MCF 10A (cell line): ENCODE measurements at regions of chr1 and their contacts with region 1.

Region 1: DNA sequence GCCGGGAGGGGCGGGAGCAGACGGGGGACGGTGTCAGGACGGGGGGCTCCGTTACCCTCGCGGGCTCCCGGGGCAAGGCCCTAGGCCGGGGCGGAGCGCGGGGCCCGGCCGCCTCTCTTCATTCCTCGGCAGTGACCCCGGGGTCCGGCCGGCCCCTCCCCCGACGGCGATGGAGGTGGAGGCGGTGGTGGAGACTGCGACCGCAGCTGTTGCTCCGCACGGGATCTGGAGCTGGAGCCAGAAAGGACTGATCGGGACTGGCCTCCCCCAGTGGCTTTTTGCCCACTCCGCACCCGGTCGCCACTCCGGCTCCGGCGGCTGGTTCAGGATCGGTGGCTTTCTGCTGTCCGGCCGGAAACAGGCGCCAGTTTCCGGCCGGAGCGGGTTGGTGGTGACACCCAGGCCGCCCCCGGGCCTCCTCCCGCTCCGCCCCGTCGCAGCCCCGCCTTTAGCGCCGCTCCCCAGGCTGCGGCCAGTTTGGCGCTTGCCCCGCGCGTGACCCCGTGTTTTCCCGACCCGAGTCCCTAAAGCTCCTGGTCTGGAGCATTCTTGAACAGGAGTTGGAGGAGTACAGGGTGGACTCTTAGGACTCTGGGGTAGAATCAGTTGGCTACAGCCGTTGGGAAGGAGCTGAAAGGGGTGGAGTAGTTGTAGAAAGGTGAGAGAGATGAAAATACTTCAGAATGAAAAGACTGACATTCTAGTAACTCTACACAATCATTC is at the start of gene OTUD7B:
- DNase-seq: peak; percentile 91
- H3K4me3 Mint-ChIP-seq: peak within 1 kb of the TSS; percentile 95
- H3K27ac Mint-ChIP-seq: peak within 1 kb of the TSS; percentile 95
- H3K4me1 Mint-ChIP-seq: peaks cover 29% of the 10 kb centered on the region
- H3K27me3 Mint-ChIP-seq: no peaks in the 10 kb centered on the region
- CTCF ChIP-seq: no peak
- total RNA-seq, gene OTUD7B: 44.3 and 47.4 TPM in 2 replicates

Region 2: GRCh38 chr1:149844101-149844500 is 166.5 kb before region 1 on chr1:
- CTCF ChIA-PET with region 1: no interaction called
- POLR2A ChIA-PET with region 1: interaction called, 23 read pairs
- intact Hi-C with region 1: no loop called
- DNase-seq: peak; percentile 80
- H3K4me3 Mint-ChIP-seq: peak overlapping the region; percentile 93
- H3K27ac Mint-ChIP-seq: peak overlapping the region; percentile 65
- H3K4me1 Mint-ChIP-seq: peaks cover 52% of the 10 kb centered on the region
- H3K27me3 Mint-ChIP-seq: no peaks in the 10 kb centered on the region
- CTCF ChIP-seq: no peak

Region 3: DNA sequence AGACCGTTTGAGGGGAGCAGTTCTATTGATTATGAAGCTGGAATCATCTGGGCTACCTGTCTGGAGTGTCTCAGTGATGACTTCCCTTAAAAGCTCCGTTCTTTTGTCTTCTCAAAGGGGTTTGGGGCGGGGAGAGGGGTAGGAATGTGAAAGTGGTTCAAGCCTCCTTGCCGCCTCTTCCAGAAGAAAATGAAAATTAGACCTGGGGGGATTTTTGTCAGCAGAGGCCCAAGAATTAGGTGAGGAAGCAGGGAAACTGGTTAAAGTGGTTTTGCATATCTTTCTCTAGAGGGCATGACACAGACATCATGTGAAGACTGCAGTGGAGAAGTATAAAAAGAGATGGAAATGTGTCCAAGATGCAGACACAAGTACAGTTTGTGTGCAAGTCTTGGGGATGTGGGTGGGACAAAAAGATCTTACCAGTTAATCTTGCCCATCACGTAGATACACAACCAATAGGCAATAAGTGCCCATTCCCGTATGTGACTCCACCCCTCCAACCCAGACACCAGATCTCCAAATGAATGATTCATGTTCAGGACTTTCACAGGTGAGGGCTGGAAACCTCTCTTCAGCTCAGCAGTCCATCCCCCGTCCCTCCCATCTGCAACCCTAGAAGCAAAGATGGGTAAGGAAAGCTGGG is 73.4 kb before region 1 on chr1:
- CTCF ChIA-PET with region 1: interaction called, 3 read pairs
- POLR2A ChIA-PET with region 1: interaction called, 60 read pairs
- intact Hi-C with region 1: no loop called
- DNase-seq: peak; percentile 96
- H3K4me3 Mint-ChIP-seq: peak overlapping the region; percentile 91
- H3K27ac Mint-ChIP-seq: peak overlapping the region; percentile 93
- H3K4me1 Mint-ChIP-seq: peaks cover 48% of the 10 kb centered on the region
- H3K27me3 Mint-ChIP-seq: no peaks in the 10 kb centered on the region
- CTCF ChIP-seq: peak; percentile 23

Region 4: GRCh38 chr1:149986486-149987294 is 23.9 kb before region 1 on chr1:
- CTCF ChIA-PET with region 1: interaction called, 3 read pairs
- POLR2A ChIA-PET with region 1: interaction called, 96 read pairs
- intact Hi-C with region 1: no loop called
- DNase-seq: peak; percentile 46
- H3K4me3 Mint-ChIP-seq: no peak overlapping the region
- H3K27ac Mint-ChIP-seq: peak overlapping the region; percentile 6
- H3K4me1 Mint-ChIP-seq: peaks cover 29% of the 10 kb centered on the region
- H3K27me3 Mint-ChIP-seq: no peaks in the 10 kb centered on the region
- CTCF ChIP-seq: no peak

Region 5: DNA sequence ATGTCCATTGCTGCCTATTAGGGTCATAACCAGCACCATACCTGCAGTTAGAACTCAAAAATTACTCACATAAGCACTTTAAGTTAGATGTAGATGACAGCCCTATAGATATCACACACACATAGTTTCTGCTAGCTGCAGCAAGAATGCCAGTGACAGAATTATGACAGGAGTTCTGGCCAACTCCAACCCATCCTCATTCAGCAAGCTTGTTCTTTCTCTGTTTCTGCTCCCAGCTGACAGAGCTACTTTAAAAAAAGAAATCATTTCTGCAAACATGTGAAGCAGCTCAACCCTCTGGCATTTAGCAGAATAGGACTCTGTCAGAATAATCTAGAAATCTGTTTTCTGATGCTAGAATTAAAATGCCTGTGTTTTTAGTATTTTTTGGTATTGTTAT is 23.8 kb after region 1 on chr1:
- CTCF ChIA-PET with region 1: interaction called, 3 read pairs
- POLR2A ChIA-PET with region 1: interaction called, 20 read pairs
- intact Hi-C with region 1: no loop called
- DNase-seq: no peak
- H3K4me3 Mint-ChIP-seq: no peak overlapping the region
- H3K27ac Mint-ChIP-seq: no peak overlapping the region
- H3K4me1 Mint-ChIP-seq: no peaks in the 10 kb centered on the region
- H3K27me3 Mint-ChIP-seq: no peaks in the 10 kb centered on the region
- CTCF ChIP-seq: no peak

Region 6: DNA sequence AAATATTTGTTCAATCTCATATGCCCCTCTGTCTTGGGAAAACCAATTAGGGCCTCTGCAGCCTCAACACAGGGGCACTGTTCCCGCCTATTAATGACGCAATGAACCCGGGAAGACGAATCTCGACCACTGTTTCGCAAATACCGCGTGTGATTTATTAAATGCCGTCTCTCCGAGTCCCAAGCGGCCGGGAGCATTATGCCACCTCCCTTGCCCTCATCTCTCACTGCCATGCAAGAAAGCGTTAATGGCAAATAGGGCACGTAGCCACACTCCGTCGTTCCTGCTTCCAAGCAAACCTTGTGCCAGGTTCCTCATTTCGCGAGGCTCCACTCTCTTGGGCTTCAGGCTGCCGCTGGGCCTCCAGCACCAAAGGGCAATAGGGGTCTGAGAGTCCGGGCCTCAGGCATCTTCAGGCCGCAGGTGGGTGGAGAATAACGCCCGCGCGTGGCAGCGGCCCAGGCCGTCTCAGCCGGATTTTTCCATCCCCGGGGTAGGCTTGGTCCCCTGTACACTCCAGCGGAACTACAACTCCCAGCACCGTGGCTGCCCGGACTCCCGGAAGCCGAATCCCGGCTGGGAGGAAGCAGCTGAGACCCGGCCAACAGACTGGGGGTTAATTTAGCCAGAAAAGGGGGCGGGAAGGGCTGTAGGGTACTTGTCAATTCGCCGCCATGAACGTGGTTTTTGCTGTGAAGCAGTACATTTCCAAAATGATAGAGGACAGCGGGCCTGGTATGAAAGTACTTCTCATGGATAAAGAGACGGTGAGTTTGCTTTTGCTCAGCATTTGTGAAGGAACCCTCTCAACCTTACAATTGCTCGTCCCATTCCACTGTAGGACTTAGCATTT is 56.9 kb after region 1 on chr1 and contains the start of gene VPS45:
- CTCF ChIA-PET with region 1: interaction called, 7 read pairs
- POLR2A ChIA-PET with region 1: interaction called, 127 read pairs
- intact Hi-C with region 1: loop called (anchors 1 kb)
- DNase-seq: peak; percentile 95
- H3K4me3 Mint-ChIP-seq: peak within 1 kb of the TSS; percentile 91
- H3K27ac Mint-ChIP-seq: peak within 1 kb of the TSS; percentile 87
- H3K4me1 Mint-ChIP-seq: peaks cover 33% of the 10 kb centered on the region
- H3K27me3 Mint-ChIP-seq: no peaks in the 10 kb centered on the region
- CTCF ChIP-seq: no peak
- total RNA-seq, gene VPS45: 35.1 and 55.1 TPM in 2 replicates

Region 7: GRCh38 chr1:150221552-150221951 is 211.0 kb after region 1 on chr1:
- CTCF ChIA-PET with region 1: no interaction called
- POLR2A ChIA-PET with region 1: no interaction called
- intact Hi-C with region 1: no loop called
- DNase-seq: peak; percentile 38
- H3K4me3 Mint-ChIP-seq: no peak overlapping the region
- H3K27ac Mint-ChIP-seq: no peak overlapping the region
- H3K4me1 Mint-ChIP-seq: no peaks in the 10 kb centered on the region
- H3K27me3 Mint-ChIP-seq: no peaks in the 10 kb centered on the region
- CTCF ChIP-seq: peak; percentile 43

Region 8: GRCh38 chr1:150829743-150830142 is 819.2 kb after region 1 on chr1:
- CTCF ChIA-PET with region 1: no interaction called
- POLR2A ChIA-PET with region 1: no interaction called
- intact Hi-C with region 1: no loop called
- DNase-seq: no peak
- H3K4me3 Mint-ChIP-seq: no peak overlapping the region
- H3K27ac Mint-ChIP-seq: no peak overlapping the region
- H3K4me1 Mint-ChIP-seq: no peaks in the 10 kb centered on the region
- H3K27me3 Mint-ChIP-seq: no peaks in the 10 kb centered on the region
- CTCF ChIP-seq: peak; percentile 39